GM10248 (cell line): ENCODE measurements at regions of chr6 and their contacts with region 1.

Region 1: GRCh38 chr6:110682460-110682853 is 132.8 kb downstream of the CDK19 start:
- DNase-seq: peak; percentile 70
- CTCF ChIP-seq: peak; percentile 61

Region 2: GRCh38 chr6:110646951-110647910 is 35.2 kb before region 1 on chr6:
- CTCF ChIA-PET with region 1: no interaction called
- POLR2A ChIA-PET with region 1: no interaction called
- DNase-seq: no peak
- CTCF ChIP-seq: peak; percentile 17

Region 3: GRCh38 chr6:110664933-110665332 is 17.5 kb before region 1 on chr6:
- CTCF ChIA-PET with region 1: interaction called, 15 read pairs
- POLR2A ChIA-PET with region 1: no interaction called
- DNase-seq: peak; percentile 34
- CTCF ChIP-seq: no peak

Region 4: DNA sequence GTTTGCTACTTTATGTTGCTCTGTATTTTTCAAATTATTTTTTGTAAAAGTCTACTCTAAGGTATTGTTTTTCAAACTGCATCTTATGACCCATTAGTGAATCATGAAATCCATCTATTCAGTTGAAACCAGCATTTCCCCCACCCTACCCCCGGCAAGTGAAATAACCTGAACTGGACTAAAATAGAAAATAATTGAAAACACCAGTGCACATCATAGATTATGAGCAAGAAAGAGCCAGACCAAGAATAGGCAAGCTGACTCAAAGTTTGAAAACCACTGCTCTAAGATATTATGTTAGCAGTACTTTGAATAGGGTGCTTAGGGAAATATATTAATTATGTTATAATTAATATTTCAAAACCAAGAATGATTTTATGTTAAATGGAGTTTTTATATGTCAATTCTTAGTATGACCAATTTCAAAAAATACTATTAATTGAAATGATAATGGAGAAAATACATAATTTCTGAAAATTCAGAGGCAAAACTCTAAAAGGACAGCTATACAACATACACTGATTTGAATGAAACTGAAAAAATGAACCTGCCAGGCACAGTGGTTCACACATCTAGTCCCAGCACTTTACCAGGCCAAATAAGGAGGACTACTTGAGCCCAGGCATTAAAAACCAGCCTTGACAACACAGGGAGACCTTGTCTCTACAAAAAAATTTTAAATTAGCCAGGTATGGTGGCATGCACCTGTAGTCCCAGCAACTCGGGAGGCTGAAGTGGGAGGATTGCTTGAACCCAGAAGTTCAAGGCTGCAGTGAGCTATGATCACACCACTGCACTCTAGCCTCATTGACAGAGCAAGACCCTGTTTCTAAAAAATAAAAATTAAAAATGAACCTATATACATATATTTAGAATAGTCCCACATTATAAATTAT is 20.8 kb after region 1 on chr6:
- CTCF ChIA-PET with region 1: interaction called, 11 read pairs
- POLR2A ChIA-PET with region 1: no interaction called
- DNase-seq: peak; percentile 16
- CTCF ChIP-seq: no peak

Region 5: GRCh38 chr6:110873981-110874879 is 191.8 kb after region 1 on chr6 and contains the start of gene AMD1:
- CTCF ChIA-PET with region 1: interaction called, 41 read pairs
- POLR2A ChIA-PET with region 1: interaction called, 16 read pairs
- DNase-seq: peak; percentile 98
- CTCF ChIP-seq: no peak

Region 6: GRCh38 chr6:110944681-110945151 is 262.3 kb after region 1 on chr6:
- CTCF ChIA-PET with region 1: interaction called, 17 read pairs
- POLR2A ChIA-PET with region 1: no interaction called
- DNase-seq: peak; percentile 82
- CTCF ChIP-seq: no peak

Region 7: DNA sequence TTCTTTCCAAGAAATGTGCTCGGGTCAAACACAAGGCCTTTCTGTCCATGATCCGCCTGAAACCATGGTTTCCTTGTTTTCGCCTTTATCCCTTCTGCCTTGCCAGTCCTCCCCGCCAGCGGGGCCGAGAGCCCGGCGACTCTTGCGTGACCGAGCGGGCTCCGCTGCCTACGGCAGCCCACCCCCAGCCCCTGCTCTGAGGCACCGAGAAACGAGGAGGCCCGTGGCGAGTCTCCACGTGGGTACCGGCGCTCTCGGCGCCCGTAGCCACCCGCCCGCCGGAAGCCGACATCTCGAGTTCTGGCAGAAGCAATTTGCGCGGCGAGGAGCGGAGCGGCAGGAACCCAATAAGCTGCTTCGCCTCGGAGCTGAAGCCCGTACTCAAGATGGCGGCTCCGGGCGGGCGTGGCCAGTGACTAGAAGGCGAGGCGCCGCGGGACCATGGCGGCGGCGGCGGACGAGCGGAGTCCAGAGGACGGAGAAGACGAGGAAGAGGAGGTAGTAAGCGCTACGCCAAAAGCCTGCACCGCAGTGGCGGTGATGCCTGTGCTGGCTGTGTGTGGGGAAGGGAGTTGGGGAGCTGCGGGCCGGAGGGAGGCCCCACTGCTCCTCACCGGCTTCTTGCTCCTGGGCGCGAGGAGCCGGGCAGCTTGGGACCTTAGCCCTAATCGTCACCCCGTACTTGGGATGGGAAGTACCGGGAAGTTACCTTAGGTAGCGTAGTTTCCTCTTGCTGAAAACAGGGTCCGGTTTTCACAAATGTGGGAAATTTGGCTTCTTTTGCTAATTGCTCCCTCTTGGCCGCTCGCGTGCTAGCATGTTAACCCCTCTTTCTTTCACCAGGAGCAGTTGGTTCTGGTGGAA is 276.1 kb after region 1 on chr6 and contains the start of gene GTF3C6:
- CTCF ChIA-PET with region 1: interaction called, 13 read pairs
- POLR2A ChIA-PET with region 1: no interaction called
- DNase-seq: peak; percentile 92
- CTCF ChIP-seq: no peak